ENCODE measurements at regions of chr5 and their contacts with region 1.

Region 1: DNA sequence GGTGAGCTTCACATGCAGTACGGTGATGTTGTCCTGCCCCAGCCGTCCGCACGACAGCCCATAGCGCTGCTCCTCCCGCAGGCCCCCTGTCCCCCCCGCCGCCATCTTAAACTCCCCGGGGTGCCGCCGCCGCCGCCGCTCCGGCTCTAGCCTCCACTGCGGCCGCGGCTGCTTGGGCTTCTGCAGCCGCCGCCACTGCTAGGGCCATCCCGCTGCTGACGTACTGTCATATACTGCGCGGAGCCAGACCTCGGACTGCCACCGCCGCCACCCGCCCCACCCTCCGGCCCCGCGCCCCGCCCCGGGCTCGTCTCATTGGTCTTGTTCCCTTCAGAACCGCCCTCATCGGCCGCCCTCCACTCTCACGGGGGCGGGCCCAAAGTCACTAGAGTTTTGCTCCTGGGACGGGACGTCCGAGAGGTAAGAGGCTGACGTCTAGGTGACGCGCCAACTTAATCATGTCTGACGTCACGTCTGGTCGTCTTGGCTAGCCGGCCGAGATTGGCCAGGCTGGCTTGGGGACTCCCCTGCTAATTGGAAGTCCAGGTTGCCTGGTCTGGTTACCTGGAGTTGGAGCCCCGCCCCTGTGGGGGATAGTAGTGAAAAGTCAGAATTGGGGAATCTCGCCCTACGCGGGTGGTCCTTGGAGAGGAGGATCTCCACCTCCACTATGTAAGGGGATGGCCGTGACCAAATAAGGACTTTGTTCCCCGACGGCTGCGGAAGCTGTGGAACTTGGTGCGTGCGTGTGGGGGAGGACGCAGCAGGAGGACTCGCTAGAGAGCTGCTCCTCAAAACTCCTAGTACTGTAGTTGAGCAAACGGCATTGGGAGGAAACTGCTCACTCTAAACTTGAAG is at the start of gene ELL2:
- DNase-seq: peak; percentile 97
- H3K4me3 ChIP-seq: peak within 1 kb of the TSS; percentile 81
- H3K27ac ChIP-seq: peak within 1 kb of the TSS; percentile 68
- H3K4me1 ChIP-seq: peaks cover 15% of the 10 kb centered on the region
- H3K27me3 ChIP-seq: no peaks in the 10 kb centered on the region
- CTCF ChIP-seq: no peak
- total RNA-seq, gene ELL2: 7.5 and 12.0 TPM in 2 replicates

Region 2: GRCh38 chr5:95822542-95823181 is 139.2 kb before region 1 on chr5 and contains the start of gene GLRX:
- CTCF ChIA-PET with region 1: no interaction called
- POLR2A ChIA-PET with region 1: no interaction called
- intact Hi-C with region 1: no loop called
- DNase-seq: peak; percentile 84
- H3K4me3 ChIP-seq: peak within 1 kb of the TSS; percentile 62
- H3K27ac ChIP-seq: peak within 1 kb of the TSS; percentile 70
- H3K4me1 ChIP-seq: peaks cover 26% of the 10 kb centered on the region
- H3K27me3 ChIP-seq: no peaks in the 10 kb centered on the region
- CTCF ChIP-seq: no peak
- total RNA-seq, gene GLRX: 27.3 and 28.6 TPM in 2 replicates

Region 3: GRCh38 chr5:95858661-95859326 is 103.1 kb before region 1 on chr5:
- CTCF ChIA-PET with region 1: no interaction called
- POLR2A ChIA-PET with region 1: no interaction called
- intact Hi-C with region 1: loop called (anchors 5 kb)
- DNase-seq: peak; percentile 92
- H3K4me3 ChIP-seq: peak overlapping the region; percentile 27
- H3K27ac ChIP-seq: no peak overlapping the region
- H3K4me1 ChIP-seq: peaks cover 17% of the 10 kb centered on the region
- H3K27me3 ChIP-seq: no peaks in the 10 kb centered on the region
- CTCF ChIP-seq: peak; percentile 99

Region 4: DNA sequence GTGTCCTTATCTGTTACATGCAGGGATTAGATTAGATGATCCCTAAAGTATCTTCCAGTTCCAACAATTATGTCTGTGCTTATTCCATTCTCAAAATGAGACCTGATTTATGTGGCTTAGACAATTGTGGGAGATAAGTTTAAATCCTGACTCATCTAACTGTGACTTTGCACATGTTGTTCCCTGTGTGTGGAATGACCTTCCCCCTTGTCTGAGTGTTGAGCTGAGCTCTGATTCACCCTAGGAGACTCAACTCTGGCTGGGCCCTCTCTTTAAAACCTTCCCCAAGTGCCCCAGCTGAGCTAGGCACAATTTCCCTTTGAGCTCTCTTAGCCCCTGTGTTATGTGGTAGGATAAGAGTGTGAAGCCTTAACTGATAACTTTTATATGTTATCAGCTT is 118.7 kb after region 1 on chr5:
- CTCF ChIA-PET with region 1: no interaction called
- POLR2A ChIA-PET with region 1: no interaction called
- intact Hi-C with region 1: loop called (anchors 5 kb)
- DNase-seq: no peak
- H3K4me3 ChIP-seq: no peak overlapping the region
- H3K27ac ChIP-seq: no peak overlapping the region
- H3K4me1 ChIP-seq: peaks cover 29% of the 10 kb centered on the region
- H3K27me3 ChIP-seq: peaks cover 35% of the 10 kb centered on the region
- CTCF ChIP-seq: no peak

Region 5: GRCh38 chr5:96790961-96791504 is 829.2 kb after region 1 on chr5:
- CTCF ChIA-PET with region 1: no interaction called
- POLR2A ChIA-PET with region 1: no interaction called
- intact Hi-C with region 1: no loop called
- DNase-seq: no peak
- H3K4me3 ChIP-seq: no peak overlapping the region
- H3K27ac ChIP-seq: no peak overlapping the region
- H3K4me1 ChIP-seq: no peaks in the 10 kb centered on the region
- H3K27me3 ChIP-seq: no peaks in the 10 kb centered on the region
- CTCF ChIP-seq: no peak

Measured in A673 (cell line).